PC-3 (cell line): ENCODE measurements at regions of chr1 and their contacts with region 1.

Region 1: DNA sequence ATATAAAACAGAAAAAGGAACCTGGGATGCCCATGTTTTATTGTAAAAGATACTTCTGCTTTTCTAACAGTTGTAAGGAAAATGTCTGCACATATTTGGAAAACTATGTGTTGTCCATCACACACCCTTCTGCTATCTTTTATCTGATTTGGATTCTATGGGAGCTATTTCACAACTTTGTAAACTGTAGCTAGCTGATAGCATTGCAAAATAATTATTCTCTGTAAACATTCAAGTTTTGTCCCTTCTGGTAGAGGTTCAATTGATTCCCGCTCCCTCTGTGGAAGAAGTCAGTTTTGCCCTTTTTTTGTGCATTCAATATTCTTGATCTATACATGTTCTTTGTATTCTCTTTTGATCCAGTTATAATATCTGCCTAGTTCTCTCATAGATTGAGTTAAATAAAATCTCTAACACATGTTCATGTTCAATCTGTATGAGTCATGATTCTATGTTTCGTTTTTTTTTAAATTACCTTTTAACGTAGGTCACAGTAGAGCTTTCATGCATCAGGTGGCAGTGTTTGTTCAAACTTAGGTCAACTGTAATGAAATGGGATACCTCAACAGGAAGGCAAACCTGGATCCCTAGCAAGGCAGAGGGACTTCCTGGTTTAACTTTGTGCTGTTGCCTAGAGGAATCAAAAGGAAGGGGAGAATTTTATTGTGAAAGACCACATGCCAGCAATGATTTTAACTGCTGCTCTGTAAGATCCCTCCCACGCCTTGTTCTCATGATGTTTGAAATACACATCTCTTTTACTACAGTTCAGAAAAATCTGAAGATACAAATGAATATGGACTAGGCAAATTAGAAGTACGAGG is 26.0 kb upstream of the BCL9 start:
- DNase-seq: peak; percentile 96
- ATAC-seq: peak; percentile 100
- H3K4me3 ChIP-seq: no peak overlapping the region
- H3K27ac ChIP-seq: peak overlapping the region; percentile 83
- H3K4me1 ChIP-seq: peaks cover 30% of the 10 kb centered on the region
- H3K27me3 ChIP-seq: no peaks in the 10 kb centered on the region
- CTCF ChIP-seq: peak; percentile 82

Region 2: GRCh38 chr1:147541672-147542568 is 26.7 kb after region 1 on chr1:
- CTCF ChIA-PET with region 1: interaction called, 5 read pairs
- POLR2A ChIA-PET with region 1: interaction called, 4 read pairs
- intact Hi-C with region 1: loop called (anchors 1 kb)
- DNase-seq: peak; percentile 41
- ATAC-seq: peak; percentile 39
- H3K4me3 ChIP-seq: peak overlapping the region; percentile 82
- H3K27ac ChIP-seq: peak overlapping the region; percentile 52
- H3K4me1 ChIP-seq: peaks cover 61% of the 10 kb centered on the region
- H3K27me3 ChIP-seq: no peaks in the 10 kb centered on the region
- CTCF ChIP-seq: no peak

Region 3: GRCh38 chr1:147599362-147600118 is 84.3 kb after region 1 on chr1:
- CTCF ChIA-PET with region 1: interaction called, 3 read pairs
- POLR2A ChIA-PET with region 1: no interaction called
- intact Hi-C with region 1: loop called (anchors 1 kb)
- DNase-seq: peak; percentile 94
- ATAC-seq: peak; percentile 82
- H3K4me3 ChIP-seq: peak overlapping the region; percentile 75
- H3K27ac ChIP-seq: peak overlapping the region; percentile 32; the same call in 1 of the 2 replicates
- H3K4me1 ChIP-seq: peaks cover 18% of the 10 kb centered on the region
- H3K27me3 ChIP-seq: no peaks in the 10 kb centered on the region
- CTCF ChIP-seq: no peak

Region 4: GRCh38 chr1:147611021-147611426 is 95.8 kb after region 1 on chr1:
- CTCF ChIA-PET with region 1: no interaction called
- POLR2A ChIA-PET with region 1: no interaction called
- intact Hi-C with region 1: loop called (anchors 1 kb)
- DNase-seq: no peak
- ATAC-seq: no peak
- H3K4me3 ChIP-seq: no peak overlapping the region
- H3K27ac ChIP-seq: no peak overlapping the region
- H3K4me1 ChIP-seq: peaks cover 23% of the 10 kb centered on the region
- H3K27me3 ChIP-seq: no peaks in the 10 kb centered on the region
- CTCF ChIP-seq: no peak

Region 5: GRCh38 chr1:147627435-147628110 is 112.3 kb after region 1 on chr1:
- CTCF ChIA-PET with region 1: interaction called, 3 read pairs
- POLR2A ChIA-PET with region 1: no interaction called
- intact Hi-C with region 1: loop called (anchors 1 kb)
- DNase-seq: peak; percentile 72
- ATAC-seq: peak; percentile 70
- H3K4me3 ChIP-seq: no peak overlapping the region
- H3K27ac ChIP-seq: no peak overlapping the region
- H3K4me1 ChIP-seq: no peaks in the 10 kb centered on the region
- H3K27me3 ChIP-seq: no peaks in the 10 kb centered on the region
- CTCF ChIP-seq: peak; percentile 97

Region 6: DNA sequence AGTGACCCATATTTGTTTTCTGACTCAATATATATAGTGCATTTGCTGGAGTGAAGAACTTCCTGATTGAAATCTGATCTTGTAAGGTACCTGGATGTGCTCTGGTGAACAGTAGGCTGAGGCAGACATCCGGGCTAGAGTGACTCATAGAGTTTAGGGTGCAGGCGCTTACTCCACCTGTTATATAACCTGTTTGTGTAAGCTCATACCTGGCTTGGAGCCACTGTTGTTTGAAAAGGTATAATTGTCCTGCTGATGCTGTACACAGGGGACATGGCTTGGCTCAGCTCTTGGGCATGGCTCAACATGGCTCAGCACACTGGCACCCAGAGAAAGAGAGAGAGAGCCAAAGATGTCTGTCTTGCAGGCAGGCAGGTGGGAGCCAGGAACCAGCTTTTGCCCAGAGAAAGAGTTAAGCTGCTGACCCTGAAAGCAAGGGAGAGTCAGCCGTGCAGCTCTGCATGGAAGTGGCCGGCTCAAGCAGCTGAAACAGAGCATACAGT is 201.9 kb after region 1 on chr1:
- CTCF ChIA-PET with region 1: no interaction called
- POLR2A ChIA-PET with region 1: no interaction called
- intact Hi-C with region 1: loop called (anchors 10 kb)
- DNase-seq: peak; percentile 99
- ATAC-seq: peak; percentile 93
- H3K4me3 ChIP-seq: no peak overlapping the region
- H3K27ac ChIP-seq: peak overlapping the region; percentile 91
- H3K4me1 ChIP-seq: peaks cover 43% of the 10 kb centered on the region
- H3K27me3 ChIP-seq: no peaks in the 10 kb centered on the region
- CTCF ChIP-seq: no peak

Region 7: GRCh38 chr1:147890177-147890790 is 375.0 kb after region 1 on chr1:
- CTCF ChIA-PET with region 1: interaction called, 3 read pairs
- POLR2A ChIA-PET with region 1: no interaction called
- intact Hi-C with region 1: loop called (anchors 1 kb)
- DNase-seq: peak; percentile 97
- ATAC-seq: peak; percentile 86
- H3K4me3 ChIP-seq: no peak overlapping the region
- H3K27ac ChIP-seq: no peak overlapping the region
- H3K4me1 ChIP-seq: peaks cover 26% of the 10 kb centered on the region
- H3K27me3 ChIP-seq: no peaks in the 10 kb centered on the region
- CTCF ChIP-seq: peak; percentile 98